Motor neuron (in vitro differentiated cells): ENCODE measurements at regions of chr5 and their contacts with region 1.

Region 1: DNA sequence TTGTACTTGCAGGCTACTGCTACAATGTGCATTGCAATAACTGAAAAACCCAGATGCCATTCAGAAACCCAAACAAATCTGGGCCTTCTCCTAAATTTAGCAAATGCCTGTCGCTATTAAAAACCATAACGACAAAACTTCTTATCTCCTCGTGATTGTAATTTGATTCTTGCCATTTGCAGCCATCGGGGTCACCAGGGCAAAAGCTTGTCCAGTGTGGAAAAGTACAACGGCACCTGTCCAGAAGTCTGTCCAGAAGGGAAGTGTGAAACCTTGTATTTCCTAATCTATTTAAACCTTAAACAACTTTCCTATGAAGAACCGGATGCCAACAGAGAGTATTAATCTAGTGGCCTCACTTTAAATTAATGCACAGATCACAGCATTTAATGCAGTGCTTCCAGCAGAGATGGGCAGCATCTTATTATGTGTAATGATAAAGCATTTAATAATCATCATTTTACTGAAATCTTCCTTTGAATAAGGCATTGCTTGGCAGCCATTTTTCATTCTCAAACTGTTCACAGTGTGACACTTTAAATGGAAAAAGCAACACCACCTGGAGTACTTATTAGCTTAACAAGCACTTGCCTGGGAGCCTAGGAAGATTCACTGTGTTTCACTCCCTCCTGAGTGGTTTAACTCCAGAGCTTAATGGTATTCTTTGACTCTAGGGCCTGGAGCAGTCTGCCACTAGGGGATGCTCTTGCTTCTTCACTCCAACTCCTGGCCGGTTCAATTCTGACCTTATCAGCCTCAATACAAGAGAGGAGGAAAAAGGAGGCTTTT is 4.9 kb upstream of the C7 start:
- ATAC-seq: peak; percentile 72 to 99 (median 88)
- H3K4me3 ChIP-seq: no peak overlapping the region
- H3K27ac ChIP-seq: no peak overlapping the region
- H3K4me1 ChIP-seq: no peaks in the 10 kb centered on the region

Region 2: DNA sequence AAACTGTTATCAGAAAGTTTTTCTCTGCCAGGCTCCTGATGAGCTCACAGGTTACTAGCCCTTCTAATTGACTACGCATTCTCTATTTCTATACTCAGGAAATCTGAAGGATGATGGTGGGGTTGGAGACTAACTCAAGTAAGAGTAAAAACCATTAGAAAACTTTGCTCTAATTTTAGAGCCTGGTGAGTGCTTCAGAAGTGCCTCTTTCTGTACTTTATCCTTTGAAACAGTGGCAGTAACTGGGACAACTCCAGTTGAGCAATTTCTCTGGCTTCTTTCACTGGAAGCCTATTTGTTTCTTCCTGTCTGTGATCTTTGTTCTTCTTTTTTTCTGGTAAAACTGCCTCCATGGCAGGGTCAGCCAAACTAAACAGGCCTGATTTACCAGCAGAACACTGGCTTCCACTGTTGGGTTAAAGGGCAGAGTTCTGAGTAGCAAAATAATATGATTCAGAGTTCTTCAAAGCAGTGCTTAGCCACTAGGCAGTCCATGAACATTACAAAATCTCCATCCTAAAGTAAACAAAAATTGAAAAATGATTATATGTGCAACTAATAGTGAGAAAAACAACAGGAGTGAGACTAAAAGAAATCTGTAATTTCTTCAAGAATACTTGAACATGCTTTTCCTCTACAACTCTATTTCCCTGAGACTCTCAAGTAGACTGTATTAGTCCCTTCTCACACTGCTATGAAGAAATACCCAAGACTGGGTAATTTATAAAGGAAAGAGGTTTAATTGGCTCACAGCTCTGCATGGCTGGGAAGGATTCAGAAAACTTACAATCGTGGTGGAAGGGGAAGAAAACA is 87.0 kb after region 1 on chr5:
- in situ Hi-C with region 1: no loop called
- ATAC-seq: peak in 1 of 8 experiments; percentile 73
- H3K4me3 ChIP-seq: no peak overlapping the region
- H3K27ac ChIP-seq: no peak overlapping the region
- H3K4me1 ChIP-seq: no peaks in the 10 kb centered on the region

Region 3: DNA sequence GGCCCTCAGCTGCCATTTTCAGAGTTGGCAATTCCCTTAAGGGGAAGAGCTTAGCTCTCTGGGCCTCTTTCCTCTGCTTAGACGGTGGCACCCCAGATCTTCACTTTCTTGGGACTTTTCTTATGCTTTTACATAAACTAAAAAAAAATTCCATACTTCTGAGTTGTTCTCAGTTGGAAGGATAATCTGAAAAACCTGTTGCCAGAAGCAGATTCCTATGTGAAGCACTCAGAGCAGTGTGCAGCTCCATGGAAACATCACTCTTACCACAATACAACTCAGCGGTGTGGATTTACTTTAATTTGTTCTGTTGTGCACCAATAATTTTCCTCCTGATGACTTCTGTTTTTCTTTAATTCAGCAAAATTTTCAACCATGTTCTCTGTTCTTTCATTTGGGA is 210.9 kb after region 1 on chr5:
- in situ Hi-C with region 1: loop called in 1 of 9 experiments (anchors 25 kb)
- ATAC-seq: peak in 3 of 8 experiments; percentile 44 to 83 (median 83)
- H3K4me3 ChIP-seq: no peak overlapping the region
- H3K27ac ChIP-seq: no peak overlapping the region
- H3K4me1 ChIP-seq: no peaks in the 10 kb centered on the region

Region 4: GRCh38 chr5:41270423-41271251 is 366.2 kb after region 1 on chr5:
- in situ Hi-C with region 1: loop called in 1 of 9 experiments (anchors 25 kb)
- ATAC-seq: peak; percentile 53 to 89 (median 78)
- H3K4me3 ChIP-seq: no peak overlapping the region
- H3K27ac ChIP-seq: no peak overlapping the region
- H3K4me1 ChIP-seq: no peaks in the 10 kb centered on the region

Region 5: DNA sequence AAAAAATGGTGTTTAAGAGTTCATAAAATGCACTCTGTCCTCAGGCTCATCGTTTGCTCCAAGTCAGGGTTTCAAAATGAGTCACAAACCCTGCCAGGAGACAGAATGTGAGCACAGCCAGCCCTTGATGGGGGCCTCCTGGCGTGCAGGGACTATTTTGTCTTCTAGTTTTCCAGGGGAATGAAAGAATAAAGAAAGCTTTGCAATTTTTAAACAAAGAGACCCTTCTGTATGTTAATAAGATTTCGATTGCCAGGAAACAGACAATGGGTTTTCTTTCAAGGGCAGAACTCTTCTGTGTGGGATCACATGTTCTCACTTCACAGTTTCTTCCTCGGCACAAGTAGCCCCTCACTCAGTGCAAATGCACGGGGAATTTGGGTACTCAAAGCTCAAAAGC is 430.4 kb after region 1 on chr5:
- in situ Hi-C with region 1: loop called in 1 of 9 experiments (anchors 25 kb)
- ATAC-seq: peak in 6 of 8 experiments; percentile 74 to 87 (median 83)
- H3K4me3 ChIP-seq: no peak overlapping the region
- H3K27ac ChIP-seq: no peak overlapping the region
- H3K4me1 ChIP-seq: peaks cover 0 to 5% of the 10 kb centered on the region in 2 donors

Region 6: GRCh38 chr5:41510176-41510831 is 605.9 kb after region 1 on chr5 and contains the start of gene PLCXD3:
- in situ Hi-C with region 1: loop called in 1 of 9 experiments (anchors 25 kb)
- ATAC-seq: peak; percentile 99
- H3K4me3 ChIP-seq: peak within 1 kb of the TSS; percentile 28 to 59 (median 48)
- H3K27ac ChIP-seq: no peak within 1 kb of the TSS
- H3K4me1 ChIP-seq: peaks cover 0 to 2% of the 10 kb centered on the region in 2 donors
- total RNA-seq, gene PLCXD3: 0.14 to 2.9 (median 0.70) TPM

Region 7: GRCh38 chr5:41636605-41637004 is 732.2 kb after region 1 on chr5:
- in situ Hi-C with region 1: loop called in 2 of 9 experiments (anchors 25 kb)
- ATAC-seq: peak in 3 of 8 experiments; percentile 57 to 87 (median 63)
- H3K4me3 ChIP-seq: no peak overlapping the region
- H3K27ac ChIP-seq: no peak overlapping the region
- H3K4me1 ChIP-seq: no peaks in the 10 kb centered on the region

Region 8: GRCh38 chr5:41843456-41844370 is 939.3 kb after region 1 on chr5:
- in situ Hi-C with region 1: loop called in 1 of 9 experiments (anchors 25 kb)
- ATAC-seq: peak in 6 of 8 experiments; percentile 36 to 65 (median 54)
- H3K4me3 ChIP-seq: no peak overlapping the region
- H3K27ac ChIP-seq: no peak overlapping the region
- H3K4me1 ChIP-seq: no peaks in the 10 kb centered on the region